SK-N-SH (cell line): ENCODE measurements at regions of chr12 and their contacts with region 1.

Region 1: GRCh38 chr12:44774815-44775411 is 101.2 kb downstream of the NELL2 start:
- DNase-seq: peak; percentile 36
- H3K4me3 ChIP-seq: peak overlapping the region in 1 of 2 experiments; percentile 22; a peak in 1 of 4 replicates
- H3K27ac ChIP-seq: no peak overlapping the region
- H3K4me1 ChIP-seq: no peaks in the 10 kb centered on the region; a peak in 2 of 4 replicates
- H3K27me3 ChIP-seq: no peaks in the 10 kb centered on the region
- CTCF ChIP-seq: peak; percentile 90
- EP300 ChIP-seq: no peak
- RAD21 ChIP-seq: peak; percentile 27; the same call in 1 of the 2 replicates

Region 2: GRCh38 chr12:44763021-44763420 is 11.9 kb before region 1 on chr12:
- CTCF ChIA-PET with region 1: interaction called, 11 read pairs
- POLR2A ChIA-PET with region 1: no interaction called
- DNase-seq: no peak
- H3K4me3 ChIP-seq: no peak overlapping the region
- H3K27ac ChIP-seq: no peak overlapping the region
- H3K4me1 ChIP-seq: no peaks in the 10 kb centered on the region; a peak in 1 of 4 replicates
- H3K27me3 ChIP-seq: no peaks in the 10 kb centered on the region
- CTCF ChIP-seq: no peak
- EP300 ChIP-seq: no peak
- RAD21 ChIP-seq: no peak